ENCODE measurements at regions of chr3 and their contacts with region 1.

Region 1: GRCh38 chr3:9534429-9534828 is 19.2 kb downstream of the LHFPL4 start:
- DNase-seq: no peak
- H3K4me3 ChIP-seq: no peak overlapping the region
- H3K27ac ChIP-seq: no peak overlapping the region
- H3K4me1 ChIP-seq: no peaks in the 10 kb centered on the region
- H3K27me3 ChIP-seq: peaks cover 4% of the 10 kb centered on the region
- CTCF ChIP-seq: no peak

Region 2: DNA sequence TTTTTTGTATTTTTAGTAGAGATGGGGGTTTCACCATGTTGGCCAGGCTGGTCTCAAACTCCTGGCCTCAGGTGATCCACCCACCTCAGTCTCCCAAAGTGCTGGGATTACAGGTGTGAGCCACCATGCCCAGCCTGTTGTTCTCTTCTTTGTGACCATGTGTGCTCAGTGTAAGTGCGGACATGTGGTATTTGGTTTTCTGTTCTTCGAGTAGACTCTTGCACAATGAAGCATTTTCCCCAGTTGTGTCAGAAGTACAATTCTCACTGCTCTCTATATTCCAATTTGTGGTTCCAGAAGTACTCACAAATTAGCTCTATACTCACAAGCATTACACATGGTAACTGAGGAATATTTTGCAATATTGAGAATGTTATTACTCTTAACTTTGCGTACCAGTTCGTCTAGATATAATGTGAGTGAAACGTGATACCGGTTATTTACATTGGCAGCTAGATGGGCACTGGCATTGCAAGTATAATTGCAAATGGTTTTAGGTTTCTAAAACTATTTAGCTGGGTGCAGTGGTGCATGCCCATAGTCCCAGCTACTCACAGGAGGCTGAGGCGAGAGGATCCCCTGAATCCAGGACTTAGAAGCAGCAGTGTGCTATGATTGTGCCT is 80.7 kb after region 1 on chr3:
- CTCF ChIA-PET with region 1: no interaction called
- dilution Hi-C with region 1: loop called (anchors 5 kb)
- in situ Hi-C with region 1: no loop called
- intact Hi-C with region 1: no loop called
- DNase-seq: no peak
- H3K4me3 ChIP-seq: no peak overlapping the region
- H3K27ac ChIP-seq: no peak overlapping the region
- H3K4me1 ChIP-seq: no peaks in the 10 kb centered on the region
- H3K27me3 ChIP-seq: no peaks in the 10 kb centered on the region
- CTCF ChIP-seq: no peak

Region 3: GRCh38 chr3:9676785-9677184 is 142.4 kb after region 1 on chr3:
- CTCF ChIA-PET with region 1: no interaction called
- dilution Hi-C with region 1: loop called (anchors 5 kb)
- in situ Hi-C with region 1: no loop called
- intact Hi-C with region 1: no loop called
- DNase-seq: no peak
- H3K4me3 ChIP-seq: no peak overlapping the region
- H3K27ac ChIP-seq: no peak overlapping the region
- H3K4me1 ChIP-seq: no peaks in the 10 kb centered on the region
- H3K27me3 ChIP-seq: no peaks in the 10 kb centered on the region
- CTCF ChIP-seq: no peak